ENCODE measurements at regions of chr11 and their contacts with region 1.

Region 1: GRCh38 chr11:26753723-26754504 is 32.1 kb upstream of the SLC5A12 start:
- DNase-seq: peak in 1 of 2 donors; percentile 44
- ATAC-seq: peak; percentile 84
- H3K4me3 ChIP-seq: no peak overlapping the region
- H3K27ac ChIP-seq: no peak overlapping the region
- H3K4me1 ChIP-seq: peaks cover 0 to 3% of the 10 kb centered on the region in 2 donors
- H3K27me3 ChIP-seq: no peaks in the 10 kb centered on the region

Region 2: DNA sequence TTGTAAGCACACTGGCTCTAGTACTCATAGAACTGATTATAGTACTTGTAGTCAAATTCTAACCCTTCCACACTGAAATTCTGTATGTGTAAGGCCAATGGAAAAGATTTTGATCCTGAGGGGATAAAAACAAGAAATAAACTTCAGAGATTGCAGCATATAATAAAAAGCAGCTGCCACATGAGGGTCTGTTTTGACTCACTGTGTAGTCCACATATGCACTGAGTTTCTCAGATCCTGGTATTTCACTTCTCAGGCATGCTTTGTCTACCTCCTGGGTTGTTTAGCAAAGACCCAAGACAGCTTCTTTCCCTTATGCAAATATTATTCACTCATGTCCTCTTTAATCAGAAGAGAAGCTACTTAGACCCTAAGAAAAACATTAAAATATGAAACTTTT is 39.0 kb after region 1 on chr11:
- intact Hi-C with region 1: no loop called
- DNase-seq: no peak
- ATAC-seq: no peak
- H3K4me3 ChIP-seq: no peak overlapping the region
- H3K27ac ChIP-seq: no peak overlapping the region
- H3K4me1 ChIP-seq: no peaks in the 10 kb centered on the region
- H3K27me3 ChIP-seq: no peaks in the 10 kb centered on the region

Region 3: GRCh38 chr11:26841818-26842473 is 88.0 kb after region 1 on chr11:
- intact Hi-C with region 1: loop called in 1 of 2 experiments (anchors 5 kb)
- DNase-seq: no peak
- ATAC-seq: peak; percentile 72
- H3K4me3 ChIP-seq: no peak overlapping the region
- H3K27ac ChIP-seq: peak overlapping the region; percentile 94 to 97
- H3K4me1 ChIP-seq: peaks cover 8 to 10% of the 10 kb centered on the region in 2 donors
- H3K27me3 ChIP-seq: no peaks in the 10 kb centered on the region

Region 4: DNA sequence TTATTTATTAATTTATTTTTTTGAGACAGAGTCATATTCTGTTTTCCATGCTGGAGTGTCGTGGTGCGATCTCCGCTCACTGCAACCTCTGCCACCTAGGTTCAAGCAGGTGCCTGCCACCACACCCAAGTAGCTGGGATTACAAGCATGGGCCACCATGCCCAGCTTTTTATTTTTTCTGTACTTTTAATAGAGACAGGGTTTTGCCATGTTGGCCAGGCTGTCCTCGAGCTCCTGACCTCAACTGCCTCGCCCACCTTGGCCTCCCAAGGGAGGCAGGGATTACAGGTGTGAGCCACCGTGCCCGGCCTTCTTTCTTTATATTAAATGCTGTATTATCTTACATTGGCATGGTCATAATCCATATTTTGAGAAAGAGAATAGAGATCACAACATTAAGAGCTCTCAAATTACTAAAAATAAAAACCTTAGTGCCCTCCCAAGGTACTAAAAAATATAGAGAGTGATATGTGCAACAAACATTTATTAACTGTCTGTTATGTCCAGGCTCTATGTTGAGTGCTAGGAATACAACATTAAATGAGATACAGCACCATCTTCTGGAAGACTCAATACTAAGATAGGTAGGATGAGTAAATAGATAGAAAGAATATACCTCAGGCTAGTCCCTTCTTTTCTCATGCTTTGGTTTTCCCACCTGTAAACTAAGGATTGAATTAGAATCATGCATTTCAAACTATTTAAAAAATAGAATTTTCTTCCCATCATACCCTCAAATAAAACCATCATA is 370.8 kb after region 1 on chr11:
- intact Hi-C with region 1: loop called (anchors 10 kb)
- DNase-seq: no peak
- ATAC-seq: no peak
- H3K4me3 ChIP-seq: no peak overlapping the region
- H3K27ac ChIP-seq: no peak overlapping the region
- H3K4me1 ChIP-seq: no peaks in the 10 kb centered on the region
- H3K27me3 ChIP-seq: no peaks in the 10 kb centered on the region

Region 5: GRCh38 chr11:27158722-27159679 is 405.1 kb after region 1 on chr11:
- intact Hi-C with region 1: loop called (anchors 1 kb)
- DNase-seq: peak; percentile 52 to 67
- ATAC-seq: peak; percentile 87
- H3K4me3 ChIP-seq: no peak overlapping the region
- H3K27ac ChIP-seq: no peak overlapping the region
- H3K4me1 ChIP-seq: no peaks in the 10 kb centered on the region
- H3K27me3 ChIP-seq: no peaks in the 10 kb centered on the region

Region 6: GRCh38 chr11:27485930-27486773 is 732.2 kb after region 1 on chr11:
- intact Hi-C with region 1: loop called in 1 of 2 experiments (anchors 10 kb)
- DNase-seq: no peak
- ATAC-seq: peak; percentile 64
- H3K4me3 ChIP-seq: no peak overlapping the region
- H3K27ac ChIP-seq: no peak overlapping the region
- H3K4me1 ChIP-seq: no peaks in the 10 kb centered on the region
- H3K27me3 ChIP-seq: no peaks in the 10 kb centered on the region